Left cardiac atrium (tissue), 4 donors: ENCODE measurements at regions of chr14 and their contacts with region 1.

Region 1: DNA sequence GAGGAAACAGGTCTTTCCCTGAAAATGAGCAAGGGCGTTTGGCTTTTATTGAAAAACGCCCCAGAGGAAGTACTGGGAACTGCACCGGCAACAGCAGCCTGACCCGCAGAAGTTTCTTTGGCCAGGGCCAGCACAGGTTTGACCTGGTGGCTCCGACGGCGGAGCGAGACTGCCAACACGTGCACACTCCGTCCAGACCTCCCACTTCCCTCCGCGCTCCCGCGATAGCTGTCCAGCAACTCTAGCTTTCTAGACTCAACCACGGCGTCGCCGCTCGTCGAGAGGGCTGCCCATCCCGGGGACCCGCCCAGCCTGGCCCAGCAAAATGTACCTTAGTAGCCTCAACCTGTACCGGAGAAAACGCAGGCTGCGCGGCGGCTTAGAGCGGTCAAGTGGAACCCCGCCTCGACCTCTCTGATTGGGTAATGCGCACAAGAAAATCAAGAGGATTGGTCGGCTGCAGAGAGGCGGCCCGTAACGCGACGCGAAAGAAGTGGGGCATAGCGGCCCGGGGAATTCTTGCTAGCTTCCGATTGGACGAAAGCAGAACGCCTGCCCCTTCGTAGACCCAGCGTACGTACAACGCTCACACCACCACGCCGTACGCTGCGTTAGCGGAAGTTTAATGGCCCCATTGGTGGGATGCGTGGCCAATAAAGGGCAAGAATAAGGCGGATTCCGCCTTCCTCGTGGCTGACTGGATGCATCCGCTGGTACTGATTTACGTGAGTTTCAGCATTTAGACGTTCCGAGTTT is at the start of gene WDR89:
- DNase-seq: peak; percentile 98
- ATAC-seq: peak; percentile 97 to 99
- total RNA-seq, gene WDR89: 5.5 to 8.6 TPM

Region 2: GRCh38 chr14:63388763-63389431 is 252.8 kb before region 1 on chr14:
- intact Hi-C with region 1: loop called in 1 of 2 experiments (anchors 2 kb)
- DNase-seq: peak; percentile 63
- ATAC-seq: peak; percentile 81 to 91

Region 3: DNA sequence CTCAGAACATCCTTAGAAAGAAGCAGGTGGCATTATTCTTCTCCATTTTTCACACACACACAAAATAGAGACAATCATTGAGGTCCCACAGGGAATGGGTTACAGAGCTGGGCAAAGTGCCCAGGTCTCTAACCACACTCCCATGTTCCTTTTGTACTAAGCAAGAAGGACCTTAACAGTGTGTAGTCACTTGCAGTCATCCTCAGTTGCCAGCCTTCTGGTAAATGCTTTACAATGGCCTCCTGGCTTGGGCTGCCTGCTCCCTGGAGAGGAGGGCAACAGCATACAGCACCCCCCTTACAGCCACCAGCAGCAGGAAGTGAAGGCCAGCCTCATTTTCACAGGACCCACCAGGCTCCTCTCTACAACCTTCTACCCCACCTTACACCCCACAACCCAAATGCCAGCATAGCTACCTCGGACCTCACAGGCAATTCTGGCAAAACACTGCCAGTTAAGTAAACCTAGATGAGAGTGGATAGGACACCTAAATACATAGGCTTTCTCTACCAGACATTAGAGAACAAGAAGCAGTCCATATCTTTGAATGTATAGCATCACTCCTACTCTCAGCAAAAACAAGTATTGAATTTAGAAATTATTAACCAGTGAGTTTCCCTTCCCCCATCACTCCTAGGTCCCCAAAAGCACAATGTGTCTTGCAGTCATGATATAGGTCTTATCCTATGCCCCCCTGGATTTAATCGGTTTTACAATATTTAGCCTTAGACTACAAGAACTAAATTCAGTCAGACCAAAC is 186.6 kb before region 1 on chr14:
- intact Hi-C with region 1: no loop called
- DNase-seq: no peak
- ATAC-seq: peak; percentile 23 to 26

Region 4: GRCh38 chr14:63727774-63728728 is 86.4 kb after region 1 on chr14 and contains the start of gene SGPP1:
- intact Hi-C with region 1: loop called in 1 of 2 experiments (anchors 10 kb)
- DNase-seq: peak; percentile 88
- ATAC-seq: peak; percentile 97 to 98
- total RNA-seq, gene SGPP1: 7.3 to 8.6 TPM